ENCODE measurements at regions of chr12 and their contacts with region 1.

Region 1: DNA sequence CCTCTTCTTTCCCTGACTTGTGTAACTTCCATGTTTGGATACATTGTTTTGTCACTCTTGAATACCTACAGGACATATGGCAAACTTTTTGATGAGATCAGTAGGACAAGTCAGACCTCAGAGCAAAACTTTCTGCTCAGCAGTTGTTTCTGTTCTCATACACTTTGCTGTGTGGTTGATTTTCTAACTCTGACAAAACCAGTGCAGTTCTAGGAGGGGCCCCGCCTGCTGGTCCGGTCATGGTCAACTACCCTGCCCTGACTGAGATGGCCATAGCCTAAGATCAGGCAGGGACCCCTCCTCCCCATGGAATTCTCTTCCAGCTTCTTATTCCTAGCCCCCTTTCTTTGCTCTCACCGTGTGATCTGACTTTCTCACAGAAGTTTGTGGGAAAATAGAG is 92.8 kb downstream of the OTOGL start:
- DNase-seq: no peak
- ATAC-seq: no peak

Region 2: GRCh38 chr12:80269803-80270552 is 77.9 kb after region 1 on chr12:
- intact Hi-C with region 1: loop called (anchors 5 kb)
- DNase-seq: no peak
- ATAC-seq: peak; percentile 55